Activated T-helper 1 cell treated with anti-CD3 and anti-CD28 coated beads, Interleukin-12 subunit alpha, Interleukin-12 subunit beta, Interleukin-2, Interleukin-4 antibody, amounts not matched to agents 30 ng/mL and 10 ng/mL and 1 ng/mL, durations not matched to agents 14 hours and 24 hours and 36 hours (primary cell): ENCODE measurements at regions of chr6 and their contacts with region 1.

Region 1: GRCh38 chr6:127971945-127972391 is 71.1 kb upstream of the THEMIS start:
- DNase-seq: peak; percentile 63
- H3K4me3 Mint-ChIP-seq: peak overlapping the region; percentile 84
- H3K27ac Mint-ChIP-seq: peak overlapping the region; percentile 95
- H3K4me1 Mint-ChIP-seq: peaks cover 67% of the 10 kb centered on the region
- H3K27me3 Mint-ChIP-seq: no peaks in the 10 kb centered on the region

Region 2: DNA sequence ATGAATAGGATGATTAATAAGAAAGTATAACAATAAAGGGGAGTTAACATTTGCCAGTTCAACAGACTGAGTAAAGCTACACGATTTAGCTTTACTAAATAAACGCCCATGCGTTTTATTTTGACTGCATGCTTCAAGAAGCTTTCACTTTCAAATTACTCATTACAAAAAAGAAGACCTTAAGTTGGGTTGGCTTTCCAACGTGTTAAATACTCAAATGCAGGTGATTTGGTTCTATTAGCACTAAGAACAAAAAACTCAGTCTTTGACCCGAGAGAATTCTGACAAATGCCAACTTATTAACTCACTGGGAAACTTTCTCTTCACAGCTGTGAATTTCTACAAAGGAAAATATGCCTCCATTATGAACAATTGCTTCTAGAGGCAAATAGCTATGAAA is 680.5 kb before region 1 on chr6:
- intact Hi-C with region 1: loop called (anchors 10 kb)
- DNase-seq: no peak
- H3K4me3 Mint-ChIP-seq: peak overlapping the region; percentile 8
- H3K27ac Mint-ChIP-seq: peak overlapping the region; percentile 77
- H3K4me1 Mint-ChIP-seq: peaks cover 32% of the 10 kb centered on the region
- H3K27me3 Mint-ChIP-seq: no peaks in the 10 kb centered on the region

Region 3: DNA sequence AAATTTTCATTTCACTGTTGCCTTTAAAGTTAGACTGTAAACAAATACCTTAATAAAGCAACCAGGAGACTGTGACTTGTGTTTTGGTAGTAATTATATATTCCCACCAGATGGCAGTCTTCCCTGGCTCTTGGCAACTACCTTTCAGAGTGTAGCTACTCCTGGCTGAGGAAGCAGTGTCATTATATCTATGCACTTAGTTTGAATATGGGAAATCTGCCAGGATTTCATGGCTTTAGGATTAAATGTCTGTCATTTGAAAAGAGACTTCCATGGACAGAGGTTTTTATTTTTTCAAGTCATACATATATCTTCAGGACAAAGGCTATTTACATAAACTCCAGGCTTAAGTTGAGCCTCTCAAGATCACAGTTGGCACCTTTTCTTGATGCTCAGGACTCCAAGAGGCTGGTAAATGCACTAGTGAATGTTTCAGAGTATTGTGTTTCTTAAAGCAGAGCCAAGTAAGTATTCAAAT is 234.9 kb before region 1 on chr6:
- intact Hi-C with region 1: loop called (anchors 2 kb)
- DNase-seq: peak; percentile 4
- H3K4me3 Mint-ChIP-seq: no peak overlapping the region
- H3K27ac Mint-ChIP-seq: peak overlapping the region; percentile 29
- H3K4me1 Mint-ChIP-seq: peaks cover 15% of the 10 kb centered on the region
- H3K27me3 Mint-ChIP-seq: no peaks in the 10 kb centered on the region

Region 4: GRCh38 chr6:127900935-127901334 is 71.0 kb before region 1 on chr6 and contains the start of gene THEMIS:
- intact Hi-C with region 1: loop called (anchors 1 kb)
- DNase-seq: peak; percentile 43
- H3K4me3 Mint-ChIP-seq: peak within 1 kb of the TSS; percentile 91
- H3K27ac Mint-ChIP-seq: peak within 1 kb of the TSS; percentile 96
- H3K4me1 Mint-ChIP-seq: peaks cover 66% of the 10 kb centered on the region
- H3K27me3 Mint-ChIP-seq: no peaks in the 10 kb centered on the region
- total RNA-seq, gene THEMIS: 10.6 and 11.3 TPM in 2 replicates

Region 5: GRCh38 chr6:127938701-127939100 is 33.3 kb before region 1 on chr6:
- intact Hi-C with region 1: loop called (anchors 1 kb)
- DNase-seq: no peak
- H3K4me3 Mint-ChIP-seq: no peak overlapping the region
- H3K27ac Mint-ChIP-seq: peak overlapping the region; percentile 87
- H3K4me1 Mint-ChIP-seq: peaks cover 51% of the 10 kb centered on the region
- H3K27me3 Mint-ChIP-seq: no peaks in the 10 kb centered on the region

Region 6: DNA sequence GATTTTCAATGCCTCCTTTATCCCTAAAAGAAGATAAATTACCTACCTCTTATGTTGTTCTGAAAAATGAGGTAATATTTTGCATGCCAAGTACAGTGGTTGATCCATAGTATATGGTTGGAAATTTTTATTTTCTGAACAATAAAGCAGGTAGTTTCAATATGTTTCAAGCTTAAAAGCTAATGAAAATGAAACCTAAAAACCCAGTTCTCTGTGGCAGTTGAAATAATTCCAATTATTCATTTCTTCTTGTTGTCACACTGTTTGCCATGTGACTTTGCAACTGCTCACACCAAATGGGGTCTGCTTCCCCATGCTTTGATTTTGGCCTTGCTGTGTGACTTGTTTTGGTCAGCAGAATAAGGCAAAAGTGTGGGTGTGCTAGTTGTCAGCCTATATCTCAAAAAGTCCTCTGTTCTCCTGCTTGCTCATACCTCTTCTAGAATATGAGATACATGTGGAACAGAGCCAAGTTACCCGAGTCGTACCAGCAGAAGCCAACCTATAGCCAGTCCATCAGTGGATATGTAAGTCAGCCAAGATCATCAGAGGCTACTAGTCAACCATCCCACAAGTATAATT is 126.1 kb after region 1 on chr6:
- intact Hi-C with region 1: loop called (anchors 2 kb)
- DNase-seq: no peak
- H3K4me3 Mint-ChIP-seq: no peak overlapping the region
- H3K27ac Mint-ChIP-seq: no peak overlapping the region
- H3K4me1 Mint-ChIP-seq: peaks cover 22% of the 10 kb centered on the region
- H3K27me3 Mint-ChIP-seq: no peaks in the 10 kb centered on the region

Region 7: DNA sequence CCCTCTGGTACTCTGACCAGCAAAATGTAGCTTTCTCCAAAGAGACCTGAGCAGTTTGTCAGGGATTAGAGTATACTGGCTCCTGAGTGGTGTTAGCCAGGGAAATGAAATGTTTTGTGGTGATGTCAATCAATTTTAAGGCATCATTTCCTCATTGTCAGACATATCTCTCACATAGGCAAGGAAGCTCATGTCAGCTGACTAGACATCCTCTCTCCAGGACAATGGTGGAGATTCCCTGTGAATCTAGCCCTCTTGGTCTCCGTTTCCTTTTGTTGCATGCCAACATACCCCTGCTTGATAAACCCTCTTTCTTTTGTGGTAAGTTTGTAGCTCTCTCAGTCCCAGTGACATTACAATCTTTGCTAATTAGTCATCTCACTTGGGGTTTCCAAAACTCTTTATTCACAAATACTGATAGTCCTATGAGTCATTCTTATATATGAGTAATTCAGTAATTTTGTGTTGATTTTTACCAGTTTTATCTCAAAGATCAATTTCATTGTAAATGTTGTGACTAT is 684.1 kb after region 1 on chr6:
- intact Hi-C with region 1: loop called (anchors 5 kb)
- DNase-seq: no peak
- H3K4me3 Mint-ChIP-seq: no peak overlapping the region
- H3K27ac Mint-ChIP-seq: peak overlapping the region; percentile 25
- H3K4me1 Mint-ChIP-seq: no peaks in the 10 kb centered on the region
- H3K27me3 Mint-ChIP-seq: no peaks in the 10 kb centered on the region